Left cardiac atrium (tissue), 4 donors: ENCODE measurements at regions of chr9 and their contacts with region 1.

Region 1: GRCh38 chr9:13962006-13962405 is 351.9 kb downstream of the NFIB start:
- DNase-seq: no peak
- ATAC-seq: peak; percentile 59

Region 2: DNA sequence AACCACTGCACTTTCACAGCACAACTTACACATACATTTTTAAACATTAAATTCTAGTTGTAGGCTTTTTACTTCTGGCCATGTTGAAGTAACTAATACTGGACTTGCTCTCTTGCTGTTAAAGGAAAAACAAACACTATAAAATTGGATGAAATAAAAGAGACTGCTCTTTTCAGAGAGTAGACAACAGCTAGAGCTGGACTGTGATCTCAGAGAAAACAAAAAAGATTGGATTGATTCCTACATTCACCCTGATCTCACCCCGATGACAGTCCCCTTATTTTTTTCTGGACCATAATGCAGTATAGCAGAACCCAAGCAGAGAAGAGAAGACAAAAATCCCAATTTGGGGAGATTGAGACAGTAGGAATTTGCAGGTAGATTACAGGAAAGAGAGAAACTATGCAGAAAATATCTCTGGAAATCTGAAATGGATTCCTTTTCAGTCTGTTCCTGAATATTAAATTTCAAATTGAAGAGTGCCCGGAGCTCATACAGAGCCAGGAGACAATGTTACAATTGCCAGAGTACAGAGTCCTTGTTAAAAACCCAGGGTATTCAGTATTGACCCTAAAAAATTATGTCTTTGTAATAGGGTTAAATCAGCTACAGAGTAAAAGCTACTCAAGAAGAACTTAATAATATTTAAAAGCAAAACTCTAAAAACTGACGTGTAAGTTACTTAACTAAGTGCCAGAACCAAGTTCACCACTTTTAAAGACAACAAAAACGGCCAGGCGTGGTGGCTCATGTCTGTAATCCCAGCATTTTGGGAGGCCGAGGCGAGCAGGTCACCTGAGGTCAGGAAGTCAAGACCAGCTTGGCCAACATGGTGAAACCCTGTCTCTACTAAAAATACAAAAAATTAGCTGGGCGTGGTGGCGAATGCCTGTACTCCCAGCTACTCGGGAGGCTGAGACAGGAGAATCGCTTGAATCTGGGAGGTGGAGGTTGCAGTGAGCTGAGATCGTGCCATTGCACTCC is 891.1 kb before region 1 on chr9:
- intact Hi-C with region 1: no loop called
- DNase-seq: no peak
- ATAC-seq: no peak

Region 3: DNA sequence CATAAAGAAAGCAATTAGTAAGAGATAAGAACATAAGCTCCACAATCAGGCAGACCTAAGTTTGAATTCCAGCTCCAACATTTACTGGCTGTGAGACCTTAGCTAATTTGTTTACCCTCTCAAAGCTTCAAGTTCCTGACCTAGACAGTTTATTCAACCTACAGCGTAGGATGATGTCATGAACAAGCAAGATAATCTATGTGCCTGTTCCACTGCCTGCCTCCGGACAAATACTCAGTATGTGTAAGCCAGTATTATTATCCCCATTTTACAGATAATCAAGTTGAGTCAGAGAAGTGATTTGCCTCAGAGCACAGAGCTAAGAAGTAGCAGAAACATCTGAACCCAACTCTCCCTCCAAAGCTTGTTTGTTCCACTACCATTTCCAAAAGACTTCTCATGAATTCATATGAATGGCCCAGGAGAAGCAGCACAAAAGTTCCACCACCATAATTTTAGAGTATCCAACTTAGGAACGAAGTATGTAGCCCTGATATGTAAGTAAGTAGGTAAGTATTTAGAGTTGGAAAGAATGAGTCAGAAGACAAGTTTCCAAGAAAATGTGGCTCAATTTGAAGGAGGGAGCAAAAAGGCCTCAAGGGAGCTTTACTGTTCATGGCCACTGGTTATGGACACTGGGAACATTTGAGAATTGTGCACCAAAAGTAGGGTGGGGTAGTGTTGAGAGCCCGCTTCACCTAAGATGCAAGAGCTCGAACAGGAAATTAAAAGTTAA is 46.2 kb before region 1 on chr9:
- intact Hi-C with region 1: loop called in 1 of 2 experiments (anchors 10 kb)
- DNase-seq: no peak
- ATAC-seq: peak in 1 of 2 donors; percentile 29